ENCODE measurements at regions of chr13 and their contacts with region 1.

Region 1: GRCh38 chr13:52968074-52968700 is 60.4 kb upstream of the OLFM4 start:
- DNase-seq: peak; percentile 92
- ATAC-seq: peak; percentile 100
- H3K4me3 Mint-ChIP-seq: no peak overlapping the region
- H3K27ac Mint-ChIP-seq: no peak overlapping the region
- H3K4me1 Mint-ChIP-seq: no peaks in the 10 kb centered on the region; the same call in 1 of the 2 replicates
- H3K27me3 Mint-ChIP-seq: peaks cover 4% of the 10 kb centered on the region; the same call in 1 of the 2 replicates
- CTCF ChIP-seq: peak; percentile 84

Region 2: DNA sequence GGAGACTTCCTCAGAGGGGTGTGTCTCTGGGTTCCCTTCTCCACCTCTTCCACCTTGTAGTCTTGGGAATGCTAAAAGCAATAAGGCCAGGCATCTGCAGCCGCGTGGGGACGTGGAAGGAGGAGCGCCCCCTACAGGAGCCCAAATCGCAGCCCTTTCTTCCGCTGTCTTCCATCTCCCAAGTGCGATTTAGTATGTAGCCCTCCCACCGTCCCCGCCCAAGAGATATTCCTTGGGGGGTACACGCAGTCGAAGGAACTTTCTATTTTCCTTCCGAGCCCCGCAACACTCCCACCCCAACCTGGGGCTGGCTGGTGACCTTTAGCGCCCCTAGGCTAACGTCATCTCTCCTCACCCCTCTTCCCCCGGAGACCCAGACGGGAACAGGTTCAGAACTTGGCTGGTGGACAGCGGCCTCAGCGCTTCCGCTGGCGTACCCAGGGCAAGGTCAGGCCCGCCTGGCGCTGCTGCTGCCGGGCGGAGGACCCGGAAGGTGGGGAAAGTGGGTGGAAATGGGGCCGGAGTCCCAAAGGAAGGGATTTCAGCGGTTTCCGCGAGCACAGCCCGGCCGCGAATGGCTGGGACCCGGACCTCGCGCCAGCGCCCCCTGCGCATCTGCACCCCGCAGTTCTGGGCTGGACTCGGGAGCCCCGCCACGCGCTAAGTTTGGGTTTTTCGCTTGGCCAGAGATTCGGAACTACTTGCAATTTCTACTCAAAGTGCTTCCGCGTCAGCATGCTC is 117.6 kb before region 1 on chr13:
- CTCF ChIA-PET with region 1: interaction called, 430 read pairs
- POLR2A ChIA-PET with region 1: interaction called, 13 read pairs
- DNase-seq: peak; percentile 94
- ATAC-seq: peak; percentile 53
- H3K4me3 Mint-ChIP-seq: peak overlapping the region; percentile 88
- H3K27ac Mint-ChIP-seq: peak overlapping the region; percentile 98
- H3K4me1 Mint-ChIP-seq: peaks cover 39% of the 10 kb centered on the region
- H3K27me3 Mint-ChIP-seq: peaks cover 59% of the 10 kb centered on the region
- CTCF ChIP-seq: peak; percentile 88

Region 3: DNA sequence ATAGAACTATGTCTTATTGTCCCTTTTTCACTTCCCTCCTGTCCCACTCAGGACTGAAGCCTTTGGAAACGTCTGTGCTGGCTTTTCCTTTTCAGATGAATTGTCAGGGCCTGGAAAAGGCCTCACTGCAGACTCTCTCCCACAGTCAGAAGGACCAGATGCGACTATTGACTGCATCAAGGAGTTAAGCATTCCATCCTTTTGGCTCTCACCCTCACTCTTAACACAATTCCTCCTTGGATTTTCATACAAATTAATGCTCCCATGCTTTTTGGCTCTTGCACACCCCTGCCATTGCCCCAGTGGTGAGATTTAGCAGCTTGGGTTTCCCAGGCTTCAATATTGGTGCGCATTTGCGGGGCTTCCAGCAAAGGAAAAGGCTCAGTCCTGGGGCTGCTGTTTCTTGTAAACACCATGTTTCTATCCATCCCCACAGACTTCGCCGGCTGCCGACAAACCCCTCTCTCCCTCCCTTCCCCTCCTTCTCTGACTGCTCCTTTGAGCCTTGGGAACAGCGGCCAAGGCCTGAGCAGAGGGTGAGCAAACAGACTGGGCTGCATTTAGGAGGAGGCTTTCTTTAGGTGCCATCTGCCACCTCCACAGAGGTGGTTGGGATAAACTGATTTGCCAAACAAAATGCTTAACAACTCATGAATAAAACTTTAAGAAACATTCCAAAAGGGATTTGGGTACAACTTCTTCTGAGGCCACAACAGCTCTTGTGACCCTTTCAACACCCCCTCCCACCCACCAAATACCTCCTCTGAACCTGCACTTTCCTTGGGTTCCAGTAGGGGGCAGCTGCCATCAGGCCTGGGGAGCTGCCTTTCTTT is 71.1 kb before region 1 on chr13:
- CTCF ChIA-PET with region 1: interaction called, 80 read pairs
- POLR2A ChIA-PET with region 1: interaction called, 3 read pairs
- DNase-seq: peak; percentile 71
- ATAC-seq: peak; percentile 88
- H3K4me3 Mint-ChIP-seq: no peak overlapping the region
- H3K27ac Mint-ChIP-seq: no peak overlapping the region
- H3K4me1 Mint-ChIP-seq: peaks cover 58% of the 10 kb centered on the region
- H3K27me3 Mint-ChIP-seq: peaks cover 34% of the 10 kb centered on the region
- CTCF ChIP-seq: peak; percentile 90

Region 4: GRCh38 chr13:52933547-52934210 is 34.5 kb before region 1 on chr13:
- CTCF ChIA-PET with region 1: interaction called, 15 read pairs
- POLR2A ChIA-PET with region 1: no interaction called
- DNase-seq: no peak
- ATAC-seq: 0 out of 2 replicates have a peak, but pooled peaks have one; percentile 39
- H3K4me3 Mint-ChIP-seq: no peak overlapping the region
- H3K27ac Mint-ChIP-seq: no peak overlapping the region
- H3K4me1 Mint-ChIP-seq: peaks cover 54% of the 10 kb centered on the region
- H3K27me3 Mint-ChIP-seq: peaks cover 10% of the 10 kb centered on the region
- CTCF ChIP-seq: no peak

Region 5: DNA sequence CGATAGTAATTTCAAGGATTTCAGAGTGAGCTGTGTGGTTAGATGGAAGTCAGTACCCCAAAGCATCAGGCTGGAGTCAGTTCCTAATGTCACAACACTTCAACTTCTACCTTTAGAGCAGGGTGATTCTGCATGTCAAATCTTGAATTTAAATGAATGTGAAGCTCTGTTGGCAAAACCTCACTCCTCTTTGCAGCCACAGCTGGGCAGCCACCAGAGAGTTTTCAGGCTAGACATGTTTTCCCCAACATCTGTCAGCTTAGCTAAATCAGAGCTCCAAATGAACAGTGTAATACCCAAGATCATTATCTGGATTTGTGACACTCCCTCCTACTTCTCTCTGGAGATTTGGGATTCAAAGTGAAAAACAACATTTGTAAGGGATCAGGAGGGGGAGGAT is 26.7 kb after region 1 on chr13:
- CTCF ChIA-PET with region 1: interaction called, 23 read pairs
- POLR2A ChIA-PET with region 1: no interaction called
- DNase-seq: no peak
- ATAC-seq: no peak
- H3K4me3 Mint-ChIP-seq: no peak overlapping the region
- H3K27ac Mint-ChIP-seq: no peak overlapping the region
- H3K4me1 Mint-ChIP-seq: peaks cover 39% of the 10 kb centered on the region
- H3K27me3 Mint-ChIP-seq: peaks cover 4% of the 10 kb centered on the region; the same call in 1 of the 2 replicates
- CTCF ChIP-seq: no peak

Region 6: GRCh38 chr13:53137779-53138178 is 169.6 kb after region 1 on chr13:
- CTCF ChIA-PET with region 1: interaction called, 14 read pairs
- POLR2A ChIA-PET with region 1: no interaction called
- DNase-seq: no peak
- ATAC-seq: no peak
- H3K4me3 Mint-ChIP-seq: no peak overlapping the region
- H3K27ac Mint-ChIP-seq: no peak overlapping the region
- H3K4me1 Mint-ChIP-seq: peaks cover 6% of the 10 kb centered on the region
- H3K27me3 Mint-ChIP-seq: no peaks in the 10 kb centered on the region
- CTCF ChIP-seq: no peak

Measured in WTC11 (cell line).